ENCODE measurements at regions of chr18 and their contacts with region 1.

Region 1: GRCh38 chr18:24426398-24427294 is at the start of gene IMPACT:
- DNase-seq: peak; percentile 90
- total RNA-seq, gene IMPACT: 24.5 TPM

Region 2: GRCh38 chr18:24190590-24190989 is 236.1 kb before region 1 on chr18:
- intact Hi-C with region 1: loop called (anchors 10 kb)
- DNase-seq: no peak

Region 3: GRCh38 chr18:24370120-24370519 is 56.5 kb before region 1 on chr18:
- intact Hi-C with region 1: loop called (anchors 5 kb)
- DNase-seq: no peak

Region 4: DNA sequence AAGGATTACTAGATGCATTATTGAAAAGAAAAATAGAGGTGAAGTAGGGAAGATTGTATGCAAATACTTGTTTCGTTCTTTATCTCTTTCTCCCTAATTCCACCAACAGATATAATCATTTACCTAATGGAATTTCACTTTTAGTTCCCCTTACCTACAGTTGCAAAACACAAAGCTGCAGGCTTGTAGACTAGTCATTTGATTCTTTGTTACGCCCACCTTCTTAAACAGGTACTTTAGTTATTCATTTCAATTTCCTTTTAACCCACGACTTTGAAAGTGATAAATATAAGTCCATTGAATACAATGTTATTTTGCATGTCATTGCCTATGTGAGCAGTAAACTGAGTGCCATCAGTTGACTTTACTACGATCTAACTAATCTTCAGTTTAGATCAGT is 29.9 kb after region 1 on chr18:
- intact Hi-C with region 1: no loop called
- DNase-seq: no peak

Region 5: DNA sequence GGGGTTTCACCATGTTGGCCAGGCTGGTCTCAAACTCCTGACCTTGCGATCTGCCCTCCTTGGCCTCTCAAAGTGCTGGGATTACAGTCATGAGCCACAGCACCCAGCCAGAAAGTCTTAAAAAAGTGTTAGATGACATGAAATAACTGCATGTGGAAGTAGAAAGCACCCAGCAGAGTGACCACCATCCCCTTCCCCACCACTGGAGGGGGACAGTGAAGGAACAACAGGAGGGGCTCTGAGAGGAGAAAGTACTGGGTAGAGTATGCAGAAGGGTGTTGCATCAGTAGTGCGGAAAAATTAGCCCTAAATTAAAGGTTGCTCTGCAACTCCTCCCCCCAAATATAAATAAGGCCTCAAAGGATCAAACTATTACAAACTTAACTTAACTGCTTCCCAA is 694.8 kb after region 1 on chr18:
- intact Hi-C with region 1: no loop called
- DNase-seq: no peak